Prostate gland (tissue), 2 donors: ENCODE measurements at regions of chr20 and their contacts with region 1.

Region 1: DNA sequence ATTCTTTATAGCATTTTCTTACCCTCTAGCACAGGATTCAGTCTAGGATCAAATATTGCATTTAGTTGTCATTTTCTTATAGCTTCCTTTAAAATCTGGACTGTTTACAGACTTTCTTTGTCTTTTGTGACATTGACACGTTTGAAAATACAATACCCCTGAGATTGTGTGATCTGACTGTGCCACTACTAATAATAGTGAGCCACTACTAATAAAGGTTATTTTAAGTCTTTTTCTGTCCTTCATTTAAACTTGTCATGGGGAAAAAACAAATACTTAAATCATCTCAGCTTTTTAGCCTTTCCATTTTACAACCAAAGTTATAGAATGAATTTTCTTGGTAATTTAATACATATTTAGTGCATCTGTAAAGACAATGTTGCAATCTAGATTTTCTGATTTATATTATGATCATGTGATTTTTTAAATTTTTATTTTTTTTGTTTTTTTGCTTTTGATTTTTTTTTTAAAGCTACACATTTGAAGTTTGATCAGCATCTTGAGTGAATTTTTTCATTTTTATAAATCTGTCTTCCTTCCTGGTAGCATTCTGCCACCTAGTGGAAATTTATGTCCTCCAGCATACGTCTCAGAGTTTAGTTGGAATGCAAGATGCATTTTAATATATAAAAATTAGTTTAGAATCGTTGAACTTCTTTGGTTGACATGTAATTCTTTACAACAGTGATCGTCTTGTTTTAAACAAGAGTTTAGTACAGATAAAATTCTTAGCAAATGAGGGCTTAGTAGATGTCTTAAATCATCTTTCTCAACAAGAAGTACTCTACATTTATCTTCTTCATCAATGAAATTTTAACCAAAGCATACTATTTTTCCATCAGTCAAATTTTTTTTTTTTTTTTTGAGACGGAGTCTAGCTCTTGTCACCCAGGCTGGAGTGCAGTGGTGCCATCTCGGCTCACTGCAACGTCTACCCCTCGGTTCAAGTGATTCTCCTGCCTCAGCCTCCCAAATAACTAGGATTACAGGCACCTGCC is 119.4 kb downstream of the NCOA3 start:
- DNase-seq: no peak
- H3K4me3 ChIP-seq: no peak overlapping the region
- H3K27ac ChIP-seq: no peak overlapping the region
- H3K4me1 ChIP-seq: no peaks in the 10 kb centered on the region
- H3K27me3 ChIP-seq: no peaks in the 10 kb centered on the region
- CTCF ChIP-seq: peak; percentile 54 to 85 (median 76)
- POLR2A ChIP-seq: no peak

Region 2: DNA sequence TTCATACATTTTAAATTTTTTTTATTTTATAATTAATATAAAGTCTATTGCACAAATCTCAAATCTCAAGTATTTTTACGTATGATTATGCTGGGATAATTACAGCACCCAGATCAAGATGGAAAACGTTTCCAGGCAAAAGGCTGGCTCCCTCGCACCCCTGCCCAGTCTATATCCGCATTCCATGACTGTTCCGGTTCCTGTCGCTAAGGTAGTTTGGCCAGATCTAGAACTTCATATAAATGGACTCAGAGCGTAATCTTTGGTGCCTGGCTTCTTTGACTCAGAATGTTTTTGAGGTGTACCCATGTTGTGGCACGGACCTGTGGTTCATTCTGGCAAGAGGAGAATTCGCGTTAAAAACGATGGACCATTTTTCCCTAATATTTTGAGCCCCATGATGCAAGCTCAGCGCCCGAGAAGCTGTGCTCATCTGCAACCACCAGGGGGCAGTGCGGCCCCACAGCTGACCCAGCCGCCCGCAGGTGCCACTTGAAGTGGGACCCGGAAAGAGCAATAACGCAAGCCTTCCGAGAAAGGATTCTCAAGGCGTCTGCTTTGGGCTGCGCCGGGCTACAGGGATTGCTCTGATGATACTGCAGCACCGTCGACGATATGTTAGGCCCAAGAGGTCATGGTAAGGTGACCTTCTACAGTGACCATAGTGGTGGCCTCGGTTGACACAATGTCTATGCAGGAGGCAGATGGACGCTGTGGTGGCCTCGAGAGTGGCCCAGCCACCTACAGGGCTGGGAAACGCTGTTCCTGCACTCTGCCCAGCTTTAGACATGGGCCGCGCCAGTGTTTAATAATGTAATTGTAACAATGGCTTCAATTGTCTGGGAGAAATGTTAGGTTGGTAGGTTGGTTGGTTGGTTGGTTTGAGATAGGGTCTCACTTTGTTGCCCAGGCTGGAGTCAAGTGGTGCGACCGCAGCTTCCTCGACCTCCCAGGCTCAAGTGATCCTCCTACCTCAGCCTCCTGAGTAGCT is 424.7 kb before region 1 on chr20:
- intact Hi-C with region 1: loop called (anchors 2 kb)
- DNase-seq: peak; percentile 25
- H3K4me3 ChIP-seq: no peak overlapping the region
- H3K27ac ChIP-seq: no peak overlapping the region
- H3K4me1 ChIP-seq: no peaks in the 10 kb centered on the region
- H3K27me3 ChIP-seq: no peaks in the 10 kb centered on the region
- CTCF ChIP-seq: peak; percentile 78 to 93 (median 88)
- POLR2A ChIP-seq: no peak

Region 3: GRCh38 chr20:47281376-47281775 is 339.7 kb before region 1 on chr20:
- intact Hi-C with region 1: no loop called
- DNase-seq: no peak
- H3K4me3 ChIP-seq: no peak overlapping the region
- H3K27ac ChIP-seq: no peak overlapping the region
- H3K4me1 ChIP-seq: no peaks in the 10 kb centered on the region
- H3K27me3 ChIP-seq: no peaks in the 10 kb centered on the region
- CTCF ChIP-seq: no peak
- POLR2A ChIP-seq: no peak

Region 4: GRCh38 chr20:47392015-47392720 is 228.9 kb before region 1 on chr20:
- intact Hi-C with region 1: loop called (anchors 10 kb)
- DNase-seq: no peak
- H3K4me3 ChIP-seq: no peak overlapping the region
- H3K27ac ChIP-seq: no peak overlapping the region
- H3K4me1 ChIP-seq: no peaks in the 10 kb centered on the region
- H3K27me3 ChIP-seq: no peaks in the 10 kb centered on the region
- CTCF ChIP-seq: no peak
- POLR2A ChIP-seq: no peak

Region 5: DNA sequence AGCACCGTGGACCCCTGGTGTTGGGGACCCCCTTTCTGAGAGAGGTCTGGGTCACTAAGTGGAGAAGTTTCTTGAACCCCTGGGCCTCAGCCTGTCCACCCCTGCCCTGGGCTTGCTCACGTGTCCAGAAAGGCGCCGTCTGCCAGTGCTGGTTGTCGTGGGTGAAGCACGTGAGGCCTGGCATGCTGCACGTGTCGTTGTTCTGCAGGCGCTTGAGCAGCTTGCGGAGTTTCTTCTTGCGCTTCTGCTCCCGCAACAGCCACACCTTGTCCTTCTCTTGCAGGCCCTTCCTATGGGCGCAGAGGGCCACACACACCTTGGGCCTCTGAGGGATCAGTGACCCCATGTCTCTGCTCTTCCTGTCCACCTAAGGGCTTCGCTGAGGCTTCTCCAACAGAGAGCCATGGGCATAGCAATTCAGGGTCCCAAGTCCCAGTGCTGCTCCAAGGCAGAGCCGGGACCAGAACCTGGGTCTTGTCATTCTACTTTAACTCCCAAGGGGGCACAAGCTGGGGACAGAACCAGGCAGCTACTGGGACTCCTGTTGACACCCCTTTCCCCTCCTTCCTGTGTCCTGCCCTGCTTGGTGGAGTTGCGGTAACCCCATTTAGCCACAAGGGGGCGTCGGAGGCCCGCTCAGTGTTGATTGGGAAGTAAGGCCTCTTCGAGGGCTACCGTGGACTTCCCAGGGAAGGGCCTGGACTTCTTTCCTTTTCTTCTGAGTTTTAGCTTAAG is 42.4 kb after region 1 on chr20:
- intact Hi-C with region 1: no loop called
- DNase-seq: peak; percentile 60
- H3K4me3 ChIP-seq: no peak overlapping the region
- H3K27ac ChIP-seq: no peak overlapping the region
- H3K4me1 ChIP-seq: no peaks in the 10 kb centered on the region
- H3K27me3 ChIP-seq: no peaks in the 10 kb centered on the region
- CTCF ChIP-seq: peak; percentile 77 to 94 (median 90)
- POLR2A ChIP-seq: no peak